Adrenal gland (tissue), 19 donors: ENCODE measurements at regions of chr2 and their contacts with region 1.

Region 1: DNA sequence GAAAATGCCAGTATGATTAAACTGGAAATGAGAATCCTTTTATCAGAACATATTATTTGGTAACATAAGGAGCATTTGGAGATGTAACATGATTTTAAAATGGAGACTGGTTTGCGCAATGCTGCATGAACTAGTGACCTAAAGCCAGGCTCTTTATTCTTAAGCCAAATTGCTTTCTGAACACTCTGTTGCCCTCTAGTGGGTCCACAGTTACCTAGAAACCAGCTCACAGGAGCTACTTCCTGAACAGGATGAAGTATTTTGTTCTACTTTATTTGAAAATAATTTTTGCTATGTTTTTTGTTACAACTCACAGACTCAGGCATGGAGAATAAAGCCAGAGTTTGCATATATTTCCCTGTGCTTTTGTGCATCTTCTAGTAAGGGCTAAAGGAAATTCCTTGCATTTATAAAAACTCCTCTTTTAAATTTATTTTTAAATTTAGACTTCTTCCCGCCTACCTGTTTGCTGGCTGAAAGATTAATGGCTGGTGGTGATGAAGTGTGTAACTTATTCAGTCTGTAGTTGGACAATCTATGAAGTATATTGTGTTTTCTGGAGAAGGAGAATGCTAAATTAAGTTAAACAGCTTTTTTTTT is 146.7 kb downstream of the PARD3B start:
- DNase-seq: peak; percentile 50 to 84 (median 72)
- H3K4me3 ChIP-seq: no peak overlapping the region
- H3K27ac ChIP-seq: no peak overlapping the region
- H3K4me1 ChIP-seq: peaks cover 0 to 5% of the 10 kb centered on the region in 2 donors
- H3K27me3 ChIP-seq: no peaks in the 10 kb centered on the region
- CTCF ChIP-seq: peak; percentile 41 to 81 (median 76)
- POLR2A ChIP-seq: no peak

Region 2: GRCh38 chr2:204325468-204325867 is 366.5 kb before region 1 on chr2:
- intact Hi-C with region 1: loop called in 1 of 2 experiments (anchors 5 kb)
- DNase-seq: peak; percentile 57 to 81 (median 68)
- H3K4me3 ChIP-seq: no peak overlapping the region
- H3K27ac ChIP-seq: no peak overlapping the region
- H3K4me1 ChIP-seq: no peaks in the 10 kb centered on the region
- H3K27me3 ChIP-seq: no peaks in the 10 kb centered on the region
- CTCF ChIP-seq: peak; percentile 80 to 94 (median 88)
- POLR2A ChIP-seq: no peak

Region 3: GRCh38 chr2:204576362-204576979 is 115.5 kb before region 1 on chr2:
- intact Hi-C with region 1: no loop called
- DNase-seq: no peak
- H3K4me3 ChIP-seq: no peak overlapping the region
- H3K27ac ChIP-seq: no peak overlapping the region
- H3K4me1 ChIP-seq: peaks cover under 1 to 8% of the 10 kb centered on the region in 2 donors
- H3K27me3 ChIP-seq: no peaks in the 10 kb centered on the region
- CTCF ChIP-seq: no peak
- POLR2A ChIP-seq: no peak

Region 4: GRCh38 chr2:204628926-204629712 is 62.9 kb before region 1 on chr2:
- intact Hi-C with region 1: no loop called
- DNase-seq: no peak
- H3K4me3 ChIP-seq: no peak overlapping the region
- H3K27ac ChIP-seq: no peak overlapping the region
- H3K4me1 ChIP-seq: no peaks in the 10 kb centered on the region
- H3K27me3 ChIP-seq: no peaks in the 10 kb centered on the region
- CTCF ChIP-seq: no peak
- POLR2A ChIP-seq: no peak

Region 5: GRCh38 chr2:204849892-204850291 is 157.9 kb after region 1 on chr2:
- intact Hi-C with region 1: no loop called
- DNase-seq: no peak
- H3K4me3 ChIP-seq: no peak overlapping the region
- H3K27ac ChIP-seq: no peak overlapping the region
- H3K4me1 ChIP-seq: no peaks in the 10 kb centered on the region
- H3K27me3 ChIP-seq: no peaks in the 10 kb centered on the region
- CTCF ChIP-seq: no peak
- POLR2A ChIP-seq: no peak